ENCODE measurements at regions of chr1 and their contacts with region 1.

Region 1: GRCh38 chr1:244128591-244129383 is 77.7 kb downstream of the ZBTB18 start:
- H3K4me3 ChIP-seq: no peak overlapping the region
- H3K27ac ChIP-seq: no peak overlapping the region
- H3K4me1 ChIP-seq: no peaks in the 10 kb centered on the region
- CTCF ChIP-seq: no peak

Region 2: GRCh38 chr1:244180256-244180655 is 51.5 kb after region 1 on chr1:
- CTCF ChIA-PET with region 1: no interaction called
- POLR2A ChIA-PET with region 1: interaction called, 11 read pairs
- H3K4me3 ChIP-seq: no peak overlapping the region
- H3K27ac ChIP-seq: no peak overlapping the region
- H3K4me1 ChIP-seq: no peaks in the 10 kb centered on the region
- CTCF ChIP-seq: no peak

Measured in HEK293 (cell line).